ENCODE measurements at regions of chr3 and their contacts with region 1.

Region 1: GRCh38 chr3:105518806-105519418 is 152.2 kb downstream of the ALCAM start:
- DNase-seq: no peak
- H3K4me3 ChIP-seq: no peak overlapping the region
- H3K27ac ChIP-seq: no peak overlapping the region
- H3K4me1 ChIP-seq: peaks cover 0 to 4% of the 10 kb centered on the region in 2 donors
- H3K27me3 ChIP-seq: no peaks in the 10 kb centered on the region
- CTCF ChIP-seq: peak; percentile 40 to 72 (median 46)

Region 2: GRCh38 chr3:104273046-104273649 is 1245.8 kb before region 1 on chr3:
- intact Hi-C with region 1: loop called (anchors 2 kb)
- DNase-seq: no peak
- H3K4me3 ChIP-seq: no peak overlapping the region
- H3K27ac ChIP-seq: no peak overlapping the region
- H3K4me1 ChIP-seq: no peaks in the 10 kb centered on the region
- H3K27me3 ChIP-seq: no peaks in the 10 kb centered on the region
- CTCF ChIP-seq: peak; percentile 43 to 77 (median 76)

Region 3: GRCh38 chr3:105564546-105565288 is 45.8 kb after region 1 on chr3:
- intact Hi-C with region 1: no loop called
- DNase-seq: no peak
- H3K4me3 ChIP-seq: no peak overlapping the region
- H3K27ac ChIP-seq: no peak overlapping the region
- H3K4me1 ChIP-seq: no peaks in the 10 kb centered on the region
- H3K27me3 ChIP-seq: no peaks in the 10 kb centered on the region
- CTCF ChIP-seq: no peak

Measured in ascending aorta (tissue), 2 donors.